Heart right ventricle (tissue), 16 donors: ENCODE measurements at regions of chr15 and their contacts with region 1.

Region 1: DNA sequence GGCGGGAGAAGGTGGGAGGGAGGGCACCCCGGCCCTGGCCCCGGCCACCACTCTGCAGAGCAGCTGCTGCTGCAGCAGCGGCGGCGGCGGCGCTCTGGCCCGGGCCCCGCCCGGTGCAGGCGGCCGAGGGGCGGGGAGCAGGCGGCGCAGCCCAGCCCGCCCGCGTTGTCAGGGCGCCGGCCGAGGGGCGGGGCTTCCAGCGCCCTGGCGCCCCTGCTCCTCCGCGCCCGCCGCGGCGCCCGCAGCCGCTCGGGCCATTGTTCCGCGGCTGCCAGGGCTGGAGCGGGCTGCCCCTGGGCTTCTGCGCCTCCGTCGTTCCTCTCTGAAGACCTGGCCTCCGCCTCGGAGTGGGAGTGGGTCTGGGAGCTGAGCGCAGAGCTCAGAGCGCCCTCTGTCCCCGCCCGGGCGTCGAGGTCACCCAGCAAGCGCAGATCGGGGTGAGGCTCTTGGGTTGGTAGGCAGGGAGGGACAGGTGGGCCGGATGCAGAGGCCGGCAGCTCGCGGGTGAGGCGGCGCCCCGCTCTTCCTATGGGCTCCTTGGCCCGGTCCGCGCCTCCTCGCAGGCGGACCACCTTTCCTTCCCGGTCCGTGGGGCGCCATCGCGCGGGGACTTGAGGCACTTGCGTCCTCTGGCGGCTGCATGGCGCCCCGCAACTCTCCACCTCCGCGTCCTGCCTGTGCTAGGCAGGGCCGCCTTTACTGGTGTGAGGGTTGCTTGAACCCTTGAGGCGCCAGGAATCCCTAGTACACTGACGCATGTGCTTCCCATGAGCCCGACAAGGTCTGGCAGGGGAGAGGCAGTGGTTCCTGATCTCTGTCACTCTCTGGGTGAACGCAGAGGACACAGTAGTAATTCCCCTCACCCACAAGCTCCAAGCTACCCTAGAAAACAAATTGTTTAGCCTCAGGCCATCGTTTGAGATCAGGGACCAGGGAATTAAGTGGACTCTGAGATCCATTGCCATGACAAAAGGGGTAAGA is at the start of gene LPCAT4:
- DNase-seq: peak; percentile 88 to 89
- ATAC-seq: peak; percentile 86 to 97 (median 92)
- H3K4me3 ChIP-seq: peak within 1 kb of the TSS; percentile 82 to 100 (median 95)
- H3K27ac ChIP-seq: peak within 1 kb of the TSS; percentile 97 to 100 (median 99)
- H3K4me1 ChIP-seq: peaks cover 0 to 26% (median 23%) of the 10 kb centered on the region in 9 donors
- H3K27me3 ChIP-seq: no peaks in the 10 kb centered on the region
- CTCF ChIP-seq: peak; percentile 90 to 100 (median 96)
- total RNA-seq, gene LPCAT4: 22.8 to 110 (median 50.6) TPM

Region 2: GRCh38 chr15:34056936-34057335 is 310.5 kb before region 1 on chr15:
- intact Hi-C with region 1: loop called in 2 of 10 experiments (anchors 2 to 5 kb)
- DNase-seq: no peak
- ATAC-seq: no peak
- H3K4me3 ChIP-seq: no peak overlapping the region
- H3K27ac ChIP-seq: peak overlapping the region in 4 of 10 donors; percentile 29 to 70 (median 45)
- H3K4me1 ChIP-seq: peaks cover 0 to 9% (median 0%) of the 10 kb centered on the region in 9 donors
- H3K27me3 ChIP-seq: no peaks in the 10 kb centered on the region
- CTCF ChIP-seq: no peak

Region 3: GRCh38 chr15:34101366-34102175 is 265.8 kb before region 1 on chr15 and contains the starts of genes EMC7 and PGBD4:
- intact Hi-C with region 1: loop called in 4 of 10 experiments (anchors 5 to 10 kb)
- DNase-seq: peak; percentile 98 to 99
- ATAC-seq: peak; percentile 99 to 100 (median 100)
- H3K4me3 ChIP-seq: peak within 1 kb of the TSS; percentile 63 to 98 (median 86)
- H3K27ac ChIP-seq: peak within 1 kb of the TSS; percentile 62 to 93 (median 84)
- H3K4me1 ChIP-seq: peaks cover 3 to 43% (median 31%) of the 10 kb centered on the region in 9 donors
- H3K27me3 ChIP-seq: no peaks in the 10 kb centered on the region
- CTCF ChIP-seq: no peak
- total RNA-seq, gene EMC7: 49.9 to 110 (median 61.4) TPM
- total RNA-seq, gene PGBD4: 1.2 to 2.5 (median 1.9) TPM

Region 4: GRCh38 chr15:34318277-34319079 is 48.9 kb before region 1 on chr15:
- intact Hi-C with region 1: loop called in 1 of 10 experiments (anchors 5 kb)
- DNase-seq: peak in 1 of 2 donors; percentile 72
- ATAC-seq: peak; percentile 93 to 99 (median 97)
- H3K4me3 ChIP-seq: peak overlapping the region in 9 of 10 donors; percentile 36 to 73 (median 57)
- H3K27ac ChIP-seq: peak overlapping the region in 9 of 10 donors; percentile 4 to 82 (median 63)
- H3K4me1 ChIP-seq: peaks cover 0 to 32% (median 29%) of the 10 kb centered on the region in 9 donors
- H3K27me3 ChIP-seq: no peaks in the 10 kb centered on the region
- CTCF ChIP-seq: no peak

Region 5: DNA sequence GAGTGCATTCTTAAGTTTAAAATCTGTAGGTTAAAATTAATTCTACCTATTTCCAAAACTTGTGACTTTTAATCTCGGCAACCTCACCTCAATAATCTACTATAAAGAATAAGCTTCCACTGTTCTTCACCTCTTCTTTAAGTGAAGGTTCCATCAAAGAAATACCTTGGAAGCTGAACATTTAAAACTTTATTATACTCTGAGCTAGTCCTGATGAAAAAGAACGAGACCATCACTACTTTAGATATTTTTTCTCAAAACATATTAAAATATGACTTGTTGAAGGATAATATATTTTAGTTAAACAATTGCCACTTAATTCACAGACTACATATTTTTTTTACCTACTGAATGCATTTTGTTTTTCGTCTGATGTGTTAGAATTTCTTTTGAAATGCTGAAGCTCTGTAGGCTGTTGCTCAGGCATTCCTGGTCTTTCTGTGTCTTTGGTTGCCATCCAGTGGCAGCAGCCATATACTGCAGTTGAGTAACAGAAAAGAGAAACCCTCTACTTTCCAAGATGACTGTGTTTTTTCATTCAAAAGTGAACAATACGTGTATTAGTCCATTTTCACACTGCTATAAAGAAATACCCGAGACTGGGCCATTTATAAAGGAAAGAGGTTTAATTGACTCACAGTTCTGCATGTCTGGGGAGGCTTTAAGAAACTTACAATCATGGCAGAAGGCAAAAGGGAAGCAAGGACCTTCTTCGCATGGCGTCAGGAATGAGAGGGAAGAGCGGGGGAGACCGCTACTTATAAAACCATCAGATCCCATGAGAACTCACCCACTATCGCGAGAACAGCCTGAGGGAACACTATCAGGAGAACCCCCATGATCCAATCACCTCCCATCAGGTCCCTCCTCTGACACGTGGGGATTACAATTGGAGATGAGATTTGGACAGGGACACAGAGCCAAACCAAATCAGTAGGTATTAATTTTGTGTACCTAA is 220.6 kb after region 1 on chr15:
- intact Hi-C with region 1: loop called in 1 of 10 experiments (anchors 10 kb)
- DNase-seq: peak in 1 of 2 donors; percentile 47
- ATAC-seq: peak in 7 of 8 donors; percentile 56 to 79 (median 68)
- H3K4me3 ChIP-seq: peak overlapping the region in 7 of 10 donors; percentile 4 to 39 (median 27)
- H3K27ac ChIP-seq: no peak overlapping the region
- H3K4me1 ChIP-seq: peaks cover 0 to 16% (median 8%) of the 10 kb centered on the region in 9 donors
- H3K27me3 ChIP-seq: peaks cover 0 to 19% (median 9%) of the 10 kb centered on the region in 7 donors
- CTCF ChIP-seq: peak; percentile 41 to 86 (median 73)